CD4-positive, alpha-beta memory T cell (primary cell): ENCODE measurements at regions of chr2 and their contacts with region 1.

Region 1: GRCh38 chr2:172465417-172466334 is 38.3 kb downstream of the ITGA6 start:
- DNase-seq: peak; percentile 75 to 80 (median 77)
- H3K4me3 ChIP-seq: peak overlapping the region in 1 of 2 donors; percentile 1
- H3K4me3 Mint-ChIP-seq: peak overlapping the region in 7 of 8 donors; percentile 36 to 94 (median 72)
- H3K27ac ChIP-seq: peak overlapping the region; percentile 50
- H3K27ac Mint-ChIP-seq: peak overlapping the region; percentile 63 to 97 (median 90)
- H3K4me1 ChIP-seq: peaks cover 54% of the 10 kb centered on the region
- H3K4me1 Mint-ChIP-seq: peaks cover 45 to 63% (median 52%) of the 10 kb centered on the region in 4 donors
- H3K27me3 ChIP-seq: no peaks in the 10 kb centered on the region
- H3K27me3 Mint-ChIP-seq: no peaks in the 10 kb centered on the region

Region 2: GRCh38 chr2:171574149-171574795 is 891.4 kb before region 1 on chr2:
- CTCF ChIA-PET with region 1: interaction called, 4 read pairs
- POLR2A ChIA-PET with region 1: interaction called, 4 read pairs
- intact Hi-C with region 1: loop called (anchors 1 kb)
- DNase-seq: peak; percentile 65 to 79 (median 75)
- H3K4me3 ChIP-seq: no peak overlapping the region
- H3K4me3 Mint-ChIP-seq: peak overlapping the region in 6 of 8 donors; percentile 17 to 51 (median 30)
- H3K27ac ChIP-seq: no peak overlapping the region
- H3K27ac Mint-ChIP-seq: peak overlapping the region in 4 of 7 donors; percentile 10 to 60 (median 40)
- H3K4me1 ChIP-seq: no peaks in the 10 kb centered on the region
- H3K4me1 Mint-ChIP-seq: peaks cover 2 to 7% (median 7%) of the 10 kb centered on the region in 4 donors
- H3K27me3 ChIP-seq: no peaks in the 10 kb centered on the region
- H3K27me3 Mint-ChIP-seq: no peaks in the 10 kb centered on the region

Region 3: GRCh38 chr2:171922230-171923022 is 543.2 kb before region 1 on chr2 and contains the start of gene HAT1:
- CTCF ChIA-PET with region 1: interaction called, 12 read pairs
- POLR2A ChIA-PET with region 1: interaction called, 6 read pairs
- intact Hi-C with region 1: loop called (anchors 10 kb)
- DNase-seq: peak; percentile 96 to 98 (median 97)
- H3K4me3 ChIP-seq: peak within 1 kb of the TSS; percentile 70 to 88
- H3K4me3 Mint-ChIP-seq: peak within 1 kb of the TSS; percentile 98 to 100 (median 100)
- H3K27ac ChIP-seq: peak within 1 kb of the TSS; percentile 95
- H3K27ac Mint-ChIP-seq: peak within 1 kb of the TSS; percentile 93 to 100 (median 99)
- H3K4me1 ChIP-seq: peaks cover 39% of the 10 kb centered on the region
- H3K4me1 Mint-ChIP-seq: peaks cover 18 to 46% (median 33%) of the 10 kb centered on the region in 4 donors
- H3K27me3 ChIP-seq: no peaks in the 10 kb centered on the region
- H3K27me3 Mint-ChIP-seq: no peaks in the 10 kb centered on the region
- total RNA-seq, gene HAT1: 22.6 to 27.7 TPM

Region 4: GRCh38 chr2:172137109-172137508 is 328.6 kb before region 1 on chr2:
- CTCF ChIA-PET with region 1: no interaction called
- POLR2A ChIA-PET with region 1: no interaction called
- intact Hi-C with region 1: no loop called
- DNase-seq: no peak
- H3K4me3 ChIP-seq: no peak overlapping the region
- H3K4me3 Mint-ChIP-seq: no peak overlapping the region
- H3K27ac ChIP-seq: no peak overlapping the region
- H3K27ac Mint-ChIP-seq: no peak overlapping the region
- H3K4me1 ChIP-seq: no peaks in the 10 kb centered on the region
- H3K4me1 Mint-ChIP-seq: no peaks in the 10 kb centered on the region
- H3K27me3 ChIP-seq: no peaks in the 10 kb centered on the region
- H3K27me3 Mint-ChIP-seq: peaks cover 4 to 10% of the 10 kb centered on the region in 2 donors

Region 5: GRCh38 chr2:172200495-172201085 is 265.1 kb before region 1 on chr2:
- CTCF ChIA-PET with region 1: interaction called, 13 read pairs
- POLR2A ChIA-PET with region 1: no interaction called
- intact Hi-C with region 1: no loop called
- DNase-seq: no peak
- H3K4me3 ChIP-seq: no peak overlapping the region
- H3K4me3 Mint-ChIP-seq: no peak overlapping the region
- H3K27ac ChIP-seq: no peak overlapping the region
- H3K27ac Mint-ChIP-seq: no peak overlapping the region
- H3K4me1 ChIP-seq: peaks cover 5% of the 10 kb centered on the region
- H3K4me1 Mint-ChIP-seq: peaks cover 5 to 12% (median 7%) of the 10 kb centered on the region in 4 donors
- H3K27me3 ChIP-seq: no peaks in the 10 kb centered on the region
- H3K27me3 Mint-ChIP-seq: peaks cover 0 to 3% of the 10 kb centered on the region in 2 donors

Region 6: GRCh38 chr2:172273910-172274547 is 191.6 kb before region 1 on chr2:
- CTCF ChIA-PET with region 1: interaction called, 14 read pairs
- POLR2A ChIA-PET with region 1: no interaction called
- intact Hi-C with region 1: no loop called
- DNase-seq: no peak
- H3K4me3 ChIP-seq: no peak overlapping the region
- H3K4me3 Mint-ChIP-seq: no peak overlapping the region
- H3K27ac ChIP-seq: no peak overlapping the region
- H3K27ac Mint-ChIP-seq: no peak overlapping the region
- H3K4me1 ChIP-seq: peaks cover 3% of the 10 kb centered on the region
- H3K4me1 Mint-ChIP-seq: peaks cover 0 to 17% (median 5%) of the 10 kb centered on the region in 4 donors
- H3K27me3 ChIP-seq: no peaks in the 10 kb centered on the region
- H3K27me3 Mint-ChIP-seq: peaks cover 9 to 13% of the 10 kb centered on the region in 2 donors

Region 7: DNA sequence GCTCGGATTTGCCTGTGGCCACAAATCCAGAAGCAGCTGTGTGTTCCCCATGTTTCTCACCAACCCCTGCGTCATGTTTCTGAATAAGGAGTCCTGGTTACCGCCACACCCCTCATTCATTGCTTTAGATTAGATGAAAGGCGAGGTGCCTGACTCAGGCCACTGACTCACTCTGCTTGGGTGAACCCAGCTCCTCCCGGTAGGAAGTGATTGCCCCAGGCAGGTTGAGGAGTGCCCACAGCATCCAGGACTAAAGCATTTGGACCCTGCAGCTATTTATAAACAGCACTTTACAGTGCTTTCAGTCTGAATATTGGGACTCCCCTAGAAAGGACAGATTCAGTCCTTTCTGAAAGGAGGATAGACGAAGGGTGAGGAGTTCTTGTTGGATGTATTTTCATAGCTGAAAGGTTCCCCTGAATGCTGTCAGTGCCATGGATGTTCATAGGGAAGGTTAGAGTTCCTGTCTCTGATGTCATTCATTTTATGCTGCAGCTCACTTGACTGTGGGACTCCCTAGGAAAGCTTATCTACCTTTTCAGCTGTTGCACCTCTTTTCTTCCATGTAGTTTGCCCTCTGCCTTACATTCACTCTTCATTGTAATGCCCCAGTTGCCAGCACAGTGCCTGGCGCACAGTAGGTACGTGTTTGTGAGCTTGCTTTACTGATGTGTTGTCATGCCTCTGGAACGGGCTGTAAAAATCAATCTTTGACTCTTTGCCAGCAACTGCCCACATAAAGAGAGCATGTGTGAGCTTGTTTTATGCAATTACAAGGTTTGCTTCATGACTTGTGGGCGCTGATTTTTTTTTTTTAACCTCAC is 23.4 kb before region 1 on chr2:
- CTCF ChIA-PET with region 1: interaction called, 1,033 read pairs
- POLR2A ChIA-PET with region 1: interaction called, 449 read pairs
- intact Hi-C with region 1: no loop called
- DNase-seq: peak in 1 of 5 donors; percentile 81
- H3K4me3 ChIP-seq: peak overlapping the region in 1 of 2 donors; percentile 39
- H3K4me3 Mint-ChIP-seq: peak overlapping the region; percentile 78 to 95 (median 84)
- H3K27ac ChIP-seq: no peak overlapping the region
- H3K27ac Mint-ChIP-seq: peak overlapping the region; percentile 75 to 89 (median 89)
- H3K4me1 ChIP-seq: peaks cover 84% of the 10 kb centered on the region
- H3K4me1 Mint-ChIP-seq: peaks cover 21 to 75% (median 53%) of the 10 kb centered on the region in 4 donors
- H3K27me3 ChIP-seq: no peaks in the 10 kb centered on the region
- H3K27me3 Mint-ChIP-seq: no peaks in the 10 kb centered on the region